ENCODE measurements at regions of chr17 and their contacts with region 1.

Region 1: GRCh38 chr17:78497115-78497540 is 80.1 kb downstream of the DNAH17 start:
- DNase-seq: peak; percentile 79 to 82
- ATAC-seq: peak; percentile 64
- H3K4me3 ChIP-seq: no peak overlapping the region
- H3K27ac ChIP-seq: no peak overlapping the region
- H3K4me1 ChIP-seq: no peaks in the 10 kb centered on the region
- H3K27me3 ChIP-seq: no peaks in the 10 kb centered on the region

Region 2: GRCh38 chr17:78708510-78708973 is 211.4 kb after region 1 on chr17:
- intact Hi-C with region 1: loop called (anchors 2 to 5 kb)
- DNase-seq: peak; percentile 79 to 86
- ATAC-seq: peak; percentile 84
- H3K4me3 ChIP-seq: no peak overlapping the region
- H3K27ac ChIP-seq: no peak overlapping the region
- H3K4me1 ChIP-seq: no peaks in the 10 kb centered on the region
- H3K27me3 ChIP-seq: no peaks in the 10 kb centered on the region

Region 3: DNA sequence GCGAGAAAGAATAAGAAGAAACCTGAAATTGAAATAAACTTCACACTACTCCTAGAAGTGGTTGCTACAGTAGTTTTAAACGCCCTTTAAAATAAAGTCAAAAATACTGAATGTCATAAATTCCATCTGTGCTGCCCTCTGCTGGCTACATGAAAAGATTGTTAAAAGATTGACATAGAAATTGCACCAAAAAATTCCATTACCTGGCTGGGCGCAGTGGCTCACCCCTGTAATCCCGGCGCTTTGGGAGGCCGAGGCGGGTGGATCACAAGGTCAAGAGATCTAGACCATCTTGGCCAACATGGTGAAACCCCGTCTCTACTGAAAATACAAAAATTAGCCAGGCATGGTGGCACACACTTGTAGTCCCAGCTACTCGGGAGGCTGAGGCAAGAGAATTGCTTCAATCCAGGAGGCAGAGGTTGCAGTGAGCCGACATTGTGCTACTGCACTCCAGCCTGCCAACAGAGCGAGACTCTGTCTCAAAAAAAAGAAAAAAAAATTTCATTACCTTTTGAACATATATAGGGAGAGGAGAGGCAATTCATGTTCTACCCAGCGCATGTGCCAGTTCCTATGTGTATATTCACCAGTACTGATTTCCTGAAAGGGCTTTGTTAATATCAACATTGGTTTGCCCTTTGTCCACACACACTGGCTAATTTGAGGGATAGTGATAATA is 248.4 kb after region 1 on chr17:
- intact Hi-C with region 1: loop called (anchors 5 to 10 kb)
- DNase-seq: peak in 1 of 2 donors; percentile 44
- ATAC-seq: no peak
- H3K4me3 ChIP-seq: no peak overlapping the region
- H3K27ac ChIP-seq: no peak overlapping the region
- H3K4me1 ChIP-seq: no peaks in the 10 kb centered on the region
- H3K27me3 ChIP-seq: no peaks in the 10 kb centered on the region